ENCODE measurements at regions of chr15 and their contacts with region 1.

Region 1: DNA sequence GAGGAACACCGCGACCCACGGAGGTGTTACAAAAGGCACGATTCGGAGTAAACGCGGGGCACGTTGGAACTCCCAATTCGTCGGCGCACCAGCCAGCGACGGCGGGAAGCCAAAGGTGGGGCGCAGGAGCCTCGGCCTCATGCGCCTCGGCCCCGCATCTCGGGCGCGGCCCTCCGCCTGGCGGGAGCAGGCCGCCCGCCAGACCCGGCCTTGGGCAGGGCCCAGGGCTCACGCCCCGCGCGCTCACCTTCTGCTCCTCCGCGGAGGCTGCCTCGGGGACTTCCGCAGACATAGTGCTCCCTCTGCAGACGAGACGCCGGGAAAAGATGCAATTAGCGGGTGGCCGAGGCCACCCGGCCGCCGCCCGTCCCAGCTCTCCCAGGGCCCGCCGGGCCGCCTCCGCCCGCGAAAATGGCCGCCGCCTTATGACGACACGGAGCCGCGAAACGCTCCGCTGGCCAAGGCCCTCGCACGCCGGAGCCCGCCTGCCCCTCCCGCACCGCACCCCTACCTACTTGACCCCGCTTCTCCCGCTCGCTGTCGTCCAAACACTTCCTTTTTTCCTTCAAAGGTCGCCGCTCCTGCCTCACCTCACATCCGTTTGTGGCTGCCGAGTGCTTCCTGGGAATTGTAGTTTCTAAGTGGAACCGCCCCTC is at the start of gene ARPP19:
- DNase-seq: peak; percentile 82
- ATAC-seq: peak; percentile 83
- H3K4me3 Mint-ChIP-seq: peak within 1 kb of the TSS; percentile 97
- H3K27ac Mint-ChIP-seq: peak within 1 kb of the TSS; percentile 100
- H3K4me1 Mint-ChIP-seq: peaks cover 49% of the 10 kb centered on the region
- H3K27me3 Mint-ChIP-seq: no peaks in the 10 kb centered on the region
- CTCF ChIP-seq: no peak
- total RNA-seq, gene ARPP19: 145 and 153 TPM in 2 replicates

Region 2: DNA sequence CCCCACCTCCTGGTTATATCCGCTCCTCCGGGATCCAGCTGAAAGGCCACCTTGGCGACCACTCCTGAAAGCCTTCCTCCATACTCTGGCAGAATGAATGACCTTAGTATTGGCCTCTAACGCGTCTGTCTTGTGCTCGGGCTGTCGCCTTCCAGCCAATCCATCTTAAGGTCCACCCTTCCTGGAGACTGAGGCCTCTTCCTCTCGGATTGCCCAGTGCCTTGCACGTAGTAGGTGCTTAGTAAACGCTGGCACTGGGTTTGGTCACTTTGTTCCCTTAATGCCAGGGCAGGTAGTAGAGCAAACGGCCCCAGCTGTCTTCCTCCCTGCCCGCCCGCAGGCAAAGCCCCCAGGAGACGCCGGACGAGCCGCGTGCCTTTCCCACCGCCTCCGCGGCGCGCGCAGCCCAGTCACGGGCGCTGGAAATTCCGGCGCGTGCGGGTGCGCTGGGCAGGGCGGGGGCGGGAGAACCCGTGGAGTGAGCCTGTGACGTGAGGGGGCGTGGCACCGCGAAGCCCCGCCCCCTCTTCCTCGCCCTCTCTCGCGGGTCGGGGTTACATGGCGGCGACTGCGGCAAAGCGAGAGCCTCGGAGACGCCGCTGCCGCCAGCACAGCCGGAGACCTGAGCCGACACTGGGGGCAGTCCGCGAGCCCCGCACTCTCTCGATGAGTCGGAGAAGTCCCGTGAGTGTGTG is 549.9 kb before region 1 on chr15 and contains the start of gene MAPK6:
- CTCF ChIA-PET with region 1: no interaction called
- POLR2A ChIA-PET with region 1: no interaction called
- intact Hi-C with region 1: loop called (anchors 5 kb)
- DNase-seq: peak; percentile 95
- ATAC-seq: peak; percentile 83
- H3K4me3 Mint-ChIP-seq: peak within 1 kb of the TSS; percentile 96
- H3K27ac Mint-ChIP-seq: peak within 1 kb of the TSS; percentile 98
- H3K4me1 Mint-ChIP-seq: peaks cover 37% of the 10 kb centered on the region
- H3K27me3 Mint-ChIP-seq: no peaks in the 10 kb centered on the region
- CTCF ChIP-seq: no peak
- total RNA-seq, gene MAPK6: 16.1 and 16.2 TPM in 2 replicates

Region 3: DNA sequence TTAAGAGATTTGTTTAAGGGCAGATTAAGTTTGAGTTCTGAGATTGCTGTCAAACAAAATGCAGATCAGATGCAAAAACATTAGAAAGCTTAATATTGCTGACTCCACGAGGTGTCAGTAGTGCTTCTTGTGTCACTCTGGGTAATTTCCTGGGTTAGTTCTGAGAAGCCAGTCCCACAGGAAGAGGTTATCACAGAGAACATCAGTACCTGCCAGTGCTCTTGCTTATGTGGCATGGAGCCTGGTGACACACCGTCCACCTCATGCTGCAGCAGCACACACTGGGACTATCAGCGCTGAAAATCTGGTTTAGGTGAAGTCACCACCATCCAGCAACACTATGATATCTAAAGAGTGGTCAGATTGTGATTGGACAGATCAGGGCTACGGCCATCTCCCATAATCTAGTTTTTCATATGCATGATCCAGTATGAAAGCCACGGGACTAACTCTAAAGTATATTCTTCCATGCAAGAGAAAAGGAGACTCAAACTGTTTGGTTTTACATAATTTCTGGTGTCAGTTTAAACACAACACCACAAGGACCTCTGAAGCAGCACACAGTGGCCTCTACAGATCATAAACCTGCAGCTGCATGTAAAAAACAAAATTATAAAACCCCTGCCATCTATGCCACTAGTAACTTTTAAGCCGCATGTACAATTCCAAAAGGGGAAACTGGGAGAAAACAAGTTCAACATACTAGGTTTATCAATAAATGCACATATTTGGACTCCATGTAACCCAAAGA is 237.1 kb before region 1 on chr15:
- CTCF ChIA-PET with region 1: no interaction called
- POLR2A ChIA-PET with region 1: no interaction called
- intact Hi-C with region 1: loop called (anchors 2 kb)
- DNase-seq: no peak
- ATAC-seq: peak; percentile 99
- H3K4me3 Mint-ChIP-seq: no peak overlapping the region
- H3K27ac Mint-ChIP-seq: peak overlapping the region; percentile 15
- H3K4me1 Mint-ChIP-seq: peaks cover 13% of the 10 kb centered on the region
- H3K27me3 Mint-ChIP-seq: no peaks in the 10 kb centered on the region
- CTCF ChIP-seq: no peak

Region 4: DNA sequence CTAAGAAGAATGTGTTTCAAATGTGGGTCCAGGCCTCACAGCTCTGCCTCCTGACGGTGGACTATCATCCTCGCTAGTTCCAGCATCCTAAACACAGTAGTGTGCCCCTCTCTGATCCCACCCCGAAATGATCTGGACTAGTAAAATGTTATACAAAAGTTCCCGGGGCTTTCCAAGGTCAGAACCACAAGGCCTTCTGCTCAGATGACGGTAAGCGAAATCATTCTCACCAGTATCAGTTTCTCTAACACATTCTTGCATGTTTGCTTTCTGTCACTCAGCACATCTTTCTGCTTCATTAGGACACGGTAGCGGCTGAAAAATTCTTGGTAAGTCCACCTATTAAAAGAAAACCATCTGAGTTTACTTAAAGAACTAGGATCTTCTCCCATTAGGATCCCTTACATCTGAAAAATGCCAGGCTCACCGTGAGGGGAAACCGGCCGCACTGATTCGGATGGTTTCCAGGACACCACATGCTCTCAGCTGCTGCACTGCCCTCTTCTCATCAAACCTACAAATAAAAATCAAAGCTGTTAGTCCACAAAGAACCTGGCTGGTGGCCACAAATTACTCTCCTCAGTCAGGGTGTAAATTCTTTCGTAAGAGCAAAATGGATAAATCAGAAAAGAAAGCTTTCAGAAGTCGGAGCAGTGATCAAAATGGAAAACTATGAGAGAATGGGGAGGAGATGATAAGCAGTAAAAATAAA is 189.2 kb before region 1 on chr15:
- CTCF ChIA-PET with region 1: no interaction called
- POLR2A ChIA-PET with region 1: no interaction called
- intact Hi-C with region 1: loop called (anchors 10 kb)
- DNase-seq: no peak
- ATAC-seq: peak; percentile 74
- H3K4me3 Mint-ChIP-seq: peak overlapping the region; percentile 47
- H3K27ac Mint-ChIP-seq: peak overlapping the region; percentile 82
- H3K4me1 Mint-ChIP-seq: peaks cover 28% of the 10 kb centered on the region
- H3K27me3 Mint-ChIP-seq: no peaks in the 10 kb centered on the region
- CTCF ChIP-seq: no peak

Region 5: DNA sequence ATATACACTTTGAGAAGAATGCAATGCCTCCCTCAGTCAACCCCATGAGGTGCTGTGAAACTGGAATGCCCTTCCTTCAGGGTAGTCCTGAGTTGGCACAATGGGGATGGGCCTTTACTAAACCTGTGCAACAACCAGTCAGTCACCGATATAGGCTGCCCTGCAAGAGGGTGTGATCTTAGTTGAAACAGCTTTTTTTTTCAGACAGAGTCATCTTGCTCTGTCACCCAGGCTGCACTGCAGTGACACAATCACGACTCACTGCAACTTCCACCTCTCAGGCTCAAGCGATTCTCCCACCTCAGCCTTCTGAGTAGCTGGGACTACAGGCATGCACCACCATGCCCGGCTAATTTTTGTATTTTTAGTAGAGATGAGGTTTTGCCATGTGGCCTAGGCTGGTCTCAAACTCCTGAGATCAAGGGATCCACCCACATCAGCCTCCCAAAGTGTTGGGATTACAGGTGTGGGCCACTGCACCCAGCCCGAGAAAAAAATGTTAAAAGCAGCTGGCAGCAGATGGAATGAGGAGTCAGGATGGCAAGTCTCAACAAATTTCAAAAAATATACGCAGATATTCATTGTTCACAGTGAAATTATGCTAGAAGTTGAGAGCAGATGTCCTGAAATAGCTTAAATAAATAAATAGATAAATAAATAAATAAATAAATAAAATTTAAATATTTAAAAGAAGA is 71.8 kb before region 1 on chr15:
- CTCF ChIA-PET with region 1: no interaction called
- POLR2A ChIA-PET with region 1: no interaction called
- intact Hi-C with region 1: no loop called
- DNase-seq: no peak
- ATAC-seq: peak; percentile 56
- H3K4me3 Mint-ChIP-seq: no peak overlapping the region
- H3K27ac Mint-ChIP-seq: peak overlapping the region; percentile 7
- H3K4me1 Mint-ChIP-seq: peaks cover 30% of the 10 kb centered on the region
- H3K27me3 Mint-ChIP-seq: no peaks in the 10 kb centered on the region
- CTCF ChIP-seq: no peak

Region 6: DNA sequence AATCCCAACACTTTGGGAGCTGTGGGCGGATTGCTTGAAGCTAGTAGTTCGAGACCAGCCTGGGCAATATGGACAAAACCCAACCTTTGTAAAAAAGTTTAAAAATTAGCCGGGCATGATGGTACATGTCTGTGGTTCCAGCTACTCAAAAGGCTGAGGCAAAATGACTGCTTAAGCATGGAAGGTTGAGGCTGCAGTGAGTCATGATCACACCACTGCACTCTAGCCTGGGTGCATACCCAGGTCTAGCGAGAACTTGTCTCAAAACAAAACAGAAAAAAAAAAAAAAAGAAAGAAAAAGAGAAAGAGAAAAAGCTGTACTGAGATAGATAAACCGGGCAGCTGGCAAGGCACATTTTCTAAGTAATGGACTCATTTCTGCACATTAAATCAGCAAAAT is 10.5 kb before region 1 on chr15:
- CTCF ChIA-PET with region 1: no interaction called
- POLR2A ChIA-PET with region 1: interaction called, 11 read pairs
- intact Hi-C with region 1: loop called (anchors 1 kb)
- DNase-seq: no peak
- ATAC-seq: peak; percentile 96
- H3K4me3 Mint-ChIP-seq: no peak overlapping the region
- H3K27ac Mint-ChIP-seq: peak overlapping the region; percentile 65
- H3K4me1 Mint-ChIP-seq: peaks cover 55% of the 10 kb centered on the region
- H3K27me3 Mint-ChIP-seq: no peaks in the 10 kb centered on the region
- CTCF ChIP-seq: no peak

Region 7: DNA sequence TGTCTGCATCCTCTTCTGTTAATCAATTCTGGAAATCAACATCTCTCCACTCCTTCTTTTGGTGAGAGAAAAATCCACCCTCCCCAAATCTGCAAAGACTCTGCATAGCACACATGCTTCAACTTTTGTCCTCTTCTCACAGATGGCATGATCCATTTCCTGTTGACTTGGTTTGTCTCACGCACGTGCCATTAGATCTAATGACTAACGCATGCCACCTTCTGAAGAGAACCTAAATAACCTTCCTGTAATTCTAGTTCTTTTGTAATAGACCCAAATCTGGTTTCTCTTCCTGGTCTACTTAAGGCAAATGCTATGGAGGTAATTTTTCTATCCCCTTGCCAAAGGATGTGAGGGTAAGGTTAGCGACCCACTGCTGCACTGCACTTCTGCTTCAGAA is 161.4 kb after region 1 on chr15:
- CTCF ChIA-PET with region 1: no interaction called
- POLR2A ChIA-PET with region 1: no interaction called
- intact Hi-C with region 1: loop called (anchors 5 kb)
- DNase-seq: no peak
- ATAC-seq: peak; percentile 91
- H3K4me3 Mint-ChIP-seq: peak overlapping the region; percentile 39
- H3K27ac Mint-ChIP-seq: peak overlapping the region; percentile 89
- H3K4me1 Mint-ChIP-seq: peaks cover 40% of the 10 kb centered on the region
- H3K27me3 Mint-ChIP-seq: no peaks in the 10 kb centered on the region
- CTCF ChIP-seq: no peak

Measured in activated B cell treated with CpG ODN at 0.5 μM for 24 hours (primary cell).